ENCODE measurements at regions of chr6 and their contacts with region 1.

Region 1: DNA sequence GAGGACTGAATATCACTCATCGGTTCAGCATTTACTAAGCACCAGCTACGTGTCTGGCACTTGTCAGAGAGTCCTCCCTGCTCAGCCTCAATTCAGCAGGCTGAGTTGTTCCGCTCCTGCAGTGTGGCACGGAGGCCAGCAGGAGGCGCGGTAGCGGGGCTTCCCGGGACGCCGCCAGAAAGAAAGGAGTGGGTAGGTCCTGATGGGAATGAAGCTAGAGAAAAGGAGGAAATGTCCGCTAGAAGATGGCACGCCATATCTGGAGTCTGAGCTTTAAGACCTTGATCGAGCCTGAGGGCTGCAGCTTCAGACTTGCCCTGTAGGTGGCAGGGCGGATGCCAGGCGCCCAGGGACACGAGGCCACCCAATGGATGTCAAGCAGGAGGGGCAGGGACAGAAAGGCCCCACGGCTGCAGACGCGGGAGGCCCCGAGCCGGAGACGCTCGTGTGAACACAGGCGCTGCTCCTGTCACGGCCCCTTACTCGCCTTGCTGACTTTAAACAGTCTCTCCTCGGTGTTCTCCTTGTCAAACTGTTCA is 18.7 kb downstream of the SERPINB6 start:
- DNase-seq: peak; percentile 88
- H3K4me3 ChIP-seq: peak overlapping the region in 1 of 2 experiments; percentile 25; a peak in 1 of 4 replicates
- H3K27ac ChIP-seq: peak overlapping the region; percentile 48 to 54
- H3K4me1 ChIP-seq: peaks cover 5 to 9% of the 10 kb centered on the region in 2 experiments; a peak in 2 of 4 replicates
- H3K27me3 ChIP-seq: no peaks in the 10 kb centered on the region
- CTCF ChIP-seq: peak; percentile 100
- EP300 ChIP-seq: no peak
- RAD21 ChIP-seq: peak; percentile 60

Region 2: DNA sequence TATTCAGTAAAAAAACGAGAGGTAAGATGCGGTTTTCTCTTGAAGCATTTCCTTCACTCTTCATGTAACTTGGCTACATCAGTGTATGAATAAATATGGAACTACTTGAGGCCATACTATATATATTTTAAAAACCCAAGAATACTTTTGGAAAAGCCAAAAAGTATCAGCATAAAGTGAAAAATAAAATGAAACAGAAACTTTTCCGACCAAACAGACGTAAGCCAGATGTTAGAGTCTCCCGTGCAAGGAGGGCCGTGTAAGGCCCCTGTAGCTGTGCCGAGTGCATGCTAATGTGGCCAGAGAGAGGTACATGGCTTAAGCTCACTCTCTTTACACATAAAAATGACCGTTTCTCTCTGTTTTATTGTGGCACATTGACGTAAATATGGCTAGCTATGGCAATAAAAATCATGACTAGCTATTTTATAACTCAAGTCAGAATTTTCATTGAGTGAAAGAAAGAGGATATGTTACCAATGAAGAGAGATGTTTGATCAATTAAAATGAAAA is 567.1 kb before region 1 on chr6:
- CTCF ChIA-PET with region 1: no interaction called
- POLR2A ChIA-PET with region 1: no interaction called
- DNase-seq: no peak
- H3K4me3 ChIP-seq: no peak overlapping the region
- H3K27ac ChIP-seq: no peak overlapping the region
- H3K4me1 ChIP-seq: no peaks in the 10 kb centered on the region
- H3K27me3 ChIP-seq: no peaks in the 10 kb centered on the region
- CTCF ChIP-seq: no peak
- EP300 ChIP-seq: no peak
- RAD21 ChIP-seq: no peak

Region 3: DNA sequence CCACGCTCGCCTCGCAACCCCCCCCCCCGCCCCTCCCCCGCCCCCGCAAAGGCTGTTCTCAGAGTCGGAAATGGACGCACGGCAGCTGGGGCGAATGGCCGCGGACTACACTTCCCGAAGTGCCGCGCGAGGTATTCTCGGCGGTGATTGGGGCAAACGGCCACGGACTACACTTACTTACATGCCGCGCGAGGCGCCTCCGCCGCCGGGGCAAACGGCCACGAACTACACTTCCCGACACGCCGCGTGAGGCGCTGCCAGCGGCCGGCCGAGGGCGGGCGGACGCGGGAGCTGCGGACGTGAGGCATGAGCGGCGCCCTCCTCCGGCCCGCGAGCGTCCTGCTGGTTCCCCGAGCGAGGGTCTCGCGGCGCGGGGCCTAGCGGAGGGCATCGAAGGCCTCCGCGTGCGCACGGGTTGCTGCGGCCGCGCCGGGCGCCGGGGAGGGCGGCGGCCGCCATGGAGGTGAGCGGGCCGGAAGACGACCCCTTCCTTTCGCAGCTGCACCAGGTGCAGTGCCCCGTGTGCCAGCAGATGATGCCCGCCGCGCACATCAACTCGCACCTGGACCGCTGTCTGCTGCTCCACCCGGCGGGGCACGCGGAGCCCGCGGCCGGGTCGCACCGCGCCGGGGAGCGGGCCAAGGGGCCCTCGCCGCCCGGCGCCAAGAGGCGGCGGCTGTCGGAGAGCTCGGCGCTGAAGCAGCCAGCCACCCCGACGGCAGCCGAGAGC is 187.3 kb before region 1 on chr6 and contains the start of gene WRNIP1:
- CTCF ChIA-PET with region 1: interaction called, 13 read pairs
- POLR2A ChIA-PET with region 1: no interaction called
- DNase-seq: peak; percentile 96
- H3K4me3 ChIP-seq: peak within 1 kb of the TSS; percentile 86 to 91
- H3K27ac ChIP-seq: peak within 1 kb of the TSS; percentile 91 to 96
- H3K4me1 ChIP-seq: peaks cover 11 to 25% of the 10 kb centered on the region in 2 experiments; a peak in 3 of 4 replicates
- H3K27me3 ChIP-seq: no peaks in the 10 kb centered on the region
- CTCF ChIP-seq: peak; percentile 55
- EP300 ChIP-seq: no peak
- RAD21 ChIP-seq: no peak
- polyA plus RNA-seq, gene WRNIP1: 47.5 and 49.0 TPM in 2 replicates

Region 4: GRCh38 chr6:2931970-2932748 is 20.5 kb before region 1 on chr6:
- CTCF ChIA-PET with region 1: interaction called, 34 read pairs
- POLR2A ChIA-PET with region 1: no interaction called
- DNase-seq: peak; percentile 86
- H3K4me3 ChIP-seq: peak overlapping the region in 1 of 2 experiments; percentile 38; a peak in 1 of 4 replicates
- H3K27ac ChIP-seq: no peak overlapping the region
- H3K4me1 ChIP-seq: peaks cover 0 to 4% of the 10 kb centered on the region in 2 experiments; a peak in 1 of 4 replicates
- H3K27me3 ChIP-seq: no peaks in the 10 kb centered on the region
- CTCF ChIP-seq: peak; percentile 97
- EP300 ChIP-seq: no peak
- RAD21 ChIP-seq: peak; percentile 91

Region 5: DNA sequence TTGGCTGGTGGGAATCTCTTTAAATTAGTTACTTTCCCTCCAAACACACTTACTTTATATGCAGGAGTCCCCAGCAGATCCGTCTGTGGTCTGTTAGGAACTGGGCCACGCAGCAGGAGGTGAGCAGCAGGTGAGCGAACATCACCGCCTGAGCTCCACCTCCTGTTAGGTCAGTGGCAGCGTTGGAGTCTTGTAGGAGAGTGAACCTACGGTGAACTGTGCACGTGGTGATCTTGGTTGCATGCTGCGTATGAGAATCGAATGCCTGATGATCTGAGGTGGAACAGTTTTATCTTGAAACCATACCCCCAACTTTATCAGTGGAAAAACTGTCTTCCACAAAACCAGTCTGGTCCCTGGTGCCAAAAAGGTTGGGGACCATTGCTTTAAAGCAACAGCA is 13.7 kb after region 1 on chr6:
- CTCF ChIA-PET with region 1: interaction called, 22 read pairs
- POLR2A ChIA-PET with region 1: no interaction called
- DNase-seq: no peak
- H3K4me3 ChIP-seq: no peak overlapping the region
- H3K27ac ChIP-seq: no peak overlapping the region
- H3K4me1 ChIP-seq: peaks cover 6 to 9% of the 10 kb centered on the region in 2 experiments; a peak in 3 of 4 replicates
- H3K27me3 ChIP-seq: no peaks in the 10 kb centered on the region
- CTCF ChIP-seq: no peak
- EP300 ChIP-seq: no peak
- RAD21 ChIP-seq: no peak

Region 6: GRCh38 chr6:2976571-2977085 is 24.0 kb after region 1 on chr6:
- CTCF ChIA-PET with region 1: interaction called, 27 read pairs
- POLR2A ChIA-PET with region 1: interaction called, 3 read pairs
- DNase-seq: no peak
- H3K4me3 ChIP-seq: peak overlapping the region in 1 of 2 experiments; percentile 22; a peak in 1 of 4 replicates
- H3K27ac ChIP-seq: peak overlapping the region in 1 of 2 experiments; percentile 86; a peak in 3 of 4 replicates
- H3K4me1 ChIP-seq: peaks cover 4 to 14% of the 10 kb centered on the region in 2 experiments; a peak in 2 of 4 replicates
- H3K27me3 ChIP-seq: no peaks in the 10 kb centered on the region
- CTCF ChIP-seq: no peak
- EP300 ChIP-seq: peak in 1 of 2 experiments; percentile 23; a peak in 1 of 4 replicates
- RAD21 ChIP-seq: no peak

Region 7: GRCh38 chr6:2988426-2989331 is 36.1 kb after region 1 on chr6:
- CTCF ChIA-PET with region 1: interaction called, 88 read pairs
- POLR2A ChIA-PET with region 1: interaction called, 26 read pairs
- DNase-seq: peak; percentile 91
- H3K4me3 ChIP-seq: peak overlapping the region; percentile 66 to 81
- H3K27ac ChIP-seq: peak overlapping the region; percentile 98 to 99
- H3K4me1 ChIP-seq: peaks cover 18 to 19% of the 10 kb centered on the region in 2 experiments
- H3K27me3 ChIP-seq: no peaks in the 10 kb centered on the region
- CTCF ChIP-seq: peak; percentile 74
- EP300 ChIP-seq: no peak; a peak in 2 of 4 replicates
- RAD21 ChIP-seq: peak; percentile 76

Measured in SK-N-SH (cell line).